Activated naive CD4-positive, alpha-beta T cell treated with anti-CD3 and anti-CD28 coated beads, Interleukin-2, amount 10 ng/mL, durations not matched to agents 7 days and 5 days (primary cell): ENCODE measurements at regions of chr11 and their contacts with region 1.

Region 1: DNA sequence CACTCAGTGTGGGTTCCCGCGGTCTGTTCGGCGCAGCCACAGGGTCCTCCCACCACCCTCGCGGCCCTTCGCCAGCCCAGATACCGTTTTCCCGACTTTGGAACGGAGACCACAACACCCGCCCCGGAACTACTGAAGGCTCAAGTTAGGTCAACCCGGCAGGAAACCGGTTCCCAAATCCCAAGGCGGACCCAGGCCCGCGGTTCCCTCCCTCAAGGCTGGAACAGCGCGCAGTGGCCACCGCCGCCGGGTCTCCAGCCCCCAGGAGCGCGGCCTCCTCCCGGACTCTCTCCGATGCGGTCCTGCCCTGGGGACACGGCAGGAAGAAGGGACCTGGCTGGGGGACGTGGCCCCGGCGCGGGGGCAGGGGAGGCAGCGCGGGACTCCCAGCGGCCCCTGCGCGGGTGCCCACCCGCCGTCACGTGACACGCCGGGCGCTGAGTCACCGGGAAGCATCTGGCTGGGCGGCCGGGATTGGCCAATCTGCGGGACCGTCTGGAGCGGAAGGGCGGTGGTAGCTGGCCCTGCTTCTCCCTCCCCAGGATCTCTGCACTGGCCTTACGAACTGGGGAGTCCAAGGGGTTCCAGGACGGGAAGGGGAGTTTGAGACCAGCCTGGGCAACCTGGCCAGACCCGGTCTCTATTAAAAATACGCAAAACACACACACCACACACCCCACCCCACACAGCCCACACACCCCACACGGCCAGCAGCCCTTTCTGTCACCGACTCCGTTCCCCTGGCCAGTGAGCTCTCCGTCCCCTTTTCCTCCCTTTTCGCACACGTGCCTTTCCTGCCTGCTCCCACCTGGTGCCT is 21.5 kb upstream of the MALAT1 start:
- DNase-seq: peak; percentile 93
- H3K4me3 Mint-ChIP-seq: peak overlapping the region; percentile 95
- H3K27ac Mint-ChIP-seq: peak overlapping the region; percentile 96
- H3K4me1 Mint-ChIP-seq: peaks cover 27% of the 10 kb centered on the region
- H3K27me3 Mint-ChIP-seq: peaks cover 12% of the 10 kb centered on the region

Region 2: DNA sequence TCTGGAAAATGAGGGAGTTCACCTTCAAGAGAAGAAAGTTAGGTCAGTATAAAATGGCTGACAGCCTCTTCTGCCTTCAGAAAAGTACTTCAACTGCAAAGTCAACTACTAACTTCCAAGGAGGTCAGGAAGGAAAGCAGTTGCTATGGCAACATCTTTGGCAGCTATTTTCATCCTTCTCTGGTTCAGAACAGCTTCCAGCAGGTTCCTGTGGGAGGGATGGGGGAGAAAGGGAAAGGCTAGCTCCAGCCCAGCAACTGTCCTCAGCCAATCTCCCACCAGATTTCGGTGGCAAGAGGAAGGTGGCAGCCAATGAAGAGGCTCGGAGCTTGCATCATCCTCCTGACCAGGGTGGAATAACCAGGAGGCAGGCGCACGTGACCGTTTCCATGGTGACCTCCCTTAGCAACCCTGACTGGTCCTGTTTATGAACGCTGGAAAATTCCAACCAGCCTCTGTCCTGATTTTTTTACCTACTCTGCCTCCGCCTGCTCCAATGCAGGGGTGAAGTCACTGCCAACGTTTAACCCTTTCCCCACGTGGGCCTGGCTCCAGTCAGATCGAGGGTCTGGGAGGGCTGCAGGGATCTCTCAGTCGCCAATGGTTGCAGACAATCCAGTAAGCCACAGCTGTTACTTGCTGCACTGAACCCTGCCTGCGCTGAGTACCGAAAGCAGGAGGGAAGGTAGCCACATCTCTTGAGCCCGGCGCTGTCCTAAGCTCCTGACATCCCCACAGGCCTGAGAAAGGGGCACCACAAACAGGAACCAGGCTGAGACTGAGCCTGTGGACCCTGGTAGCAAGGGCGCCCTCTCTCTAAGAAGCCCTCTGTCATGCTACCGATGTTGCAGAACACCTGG is 10.3 kb after region 1 on chr11:
- CTCF ChIA-PET with region 1: interaction called, 10 read pairs
- DNase-seq: peak; percentile 44
- H3K4me3 Mint-ChIP-seq: no peak overlapping the region
- H3K27ac Mint-ChIP-seq: peak overlapping the region; percentile 54
- H3K4me1 Mint-ChIP-seq: peaks cover 40% of the 10 kb centered on the region
- H3K27me3 Mint-ChIP-seq: peaks cover 30% of the 10 kb centered on the region

Region 3: GRCh38 chr11:65497141-65498041 is 20.0 kb after region 1 on chr11:
- CTCF ChIA-PET with region 1: interaction called, 21 read pairs
- DNase-seq: peak; percentile 99
- H3K4me3 Mint-ChIP-seq: no peak overlapping the region
- H3K27ac Mint-ChIP-seq: no peak overlapping the region
- H3K4me1 Mint-ChIP-seq: peaks cover 36% of the 10 kb centered on the region
- H3K27me3 Mint-ChIP-seq: peaks cover 4% of the 10 kb centered on the region